Natural killer cell (primary cell): ENCODE measurements at regions of chr17 and their contacts with region 1.

Region 1: GRCh38 chr17:30336369-30337171 is 2.7 kb upstream of the TMIGD1 start:
- DNase-seq: peak; percentile 21 to 85
- ATAC-seq: peak; percentile 51 to 65 (median 62)
- H3K4me3 ChIP-seq: no peak overlapping the region
- H3K4me3 Mint-ChIP-seq: no peak overlapping the region
- H3K27ac ChIP-seq: no peak overlapping the region
- H3K27ac Mint-ChIP-seq: no peak overlapping the region
- H3K4me1 ChIP-seq: peaks cover 12% of the 10 kb centered on the region
- H3K4me1 Mint-ChIP-seq: peaks cover 20 to 30% of the 10 kb centered on the region in 2 donors
- H3K27me3 ChIP-seq: no peaks in the 10 kb centered on the region
- H3K27me3 Mint-ChIP-seq: no peaks in the 10 kb centered on the region
- CTCF ChIP-seq: peak; percentile 85

Region 2: DNA sequence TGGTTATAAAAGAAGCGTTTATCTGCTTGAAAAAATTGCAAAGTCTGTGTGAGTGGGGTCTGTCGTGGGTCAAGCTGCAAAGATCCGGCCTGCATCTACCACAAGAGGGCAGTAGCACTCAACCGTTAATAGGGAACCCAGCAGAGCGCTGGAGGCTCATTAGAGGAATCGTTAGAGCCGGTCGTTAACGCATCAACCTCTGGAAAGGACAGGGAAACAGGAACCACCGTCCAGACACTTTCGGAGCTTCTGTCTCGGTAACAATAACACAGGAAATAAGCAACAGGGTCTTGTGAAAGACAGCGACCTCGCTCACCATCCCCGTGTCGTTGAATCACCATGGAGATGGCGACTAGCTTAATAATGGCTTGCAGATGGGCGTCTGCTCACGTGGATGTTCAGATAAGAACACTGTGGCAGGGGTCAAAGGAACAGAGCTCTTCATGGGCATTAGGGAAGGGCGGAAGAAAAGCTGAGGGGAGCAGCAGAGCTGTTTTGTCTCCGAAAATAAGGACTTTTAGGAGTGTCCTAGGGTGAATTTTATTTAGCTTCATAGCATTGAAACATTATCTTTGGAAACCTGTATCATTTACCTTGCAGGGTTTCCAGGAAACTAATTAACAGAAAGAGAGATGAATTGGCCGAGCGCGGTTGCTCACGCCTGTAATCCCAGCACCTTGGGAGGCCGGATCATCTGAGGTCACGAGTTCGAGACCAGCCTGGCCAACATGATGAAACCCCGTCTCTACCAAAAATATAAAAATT is 231.8 kb before region 1 on chr17:
- intact Hi-C with region 1: loop called (anchors 1 kb)
- DNase-seq: peak; percentile 55 to 87
- ATAC-seq: peak; percentile 93 to 95 (median 94)
- H3K4me3 ChIP-seq: peak overlapping the region; percentile 25
- H3K4me3 Mint-ChIP-seq: peak overlapping the region; percentile 84
- H3K27ac ChIP-seq: no peak overlapping the region
- H3K27ac Mint-ChIP-seq: peak overlapping the region; percentile 4 to 78
- H3K4me1 ChIP-seq: peaks cover 8% of the 10 kb centered on the region
- H3K4me1 Mint-ChIP-seq: peaks cover 6% of the 10 kb centered on the region in 2 donors
- H3K27me3 ChIP-seq: no peaks in the 10 kb centered on the region
- H3K27me3 Mint-ChIP-seq: peaks cover 10 to 27% of the 10 kb centered on the region in 2 donors
- CTCF ChIP-seq: peak; percentile 95

Region 3: GRCh38 chr17:30124273-30124796 is 212.2 kb before region 1 on chr17:
- intact Hi-C with region 1: loop called (anchors 1 kb)
- DNase-seq: no peak
- ATAC-seq: no peak
- H3K4me3 ChIP-seq: no peak overlapping the region
- H3K4me3 Mint-ChIP-seq: no peak overlapping the region
- H3K27ac ChIP-seq: no peak overlapping the region
- H3K27ac Mint-ChIP-seq: no peak overlapping the region
- H3K4me1 ChIP-seq: peaks cover 8% of the 10 kb centered on the region
- H3K4me1 Mint-ChIP-seq: peaks cover 26 to 31% of the 10 kb centered on the region in 2 donors
- H3K27me3 ChIP-seq: no peaks in the 10 kb centered on the region
- H3K27me3 Mint-ChIP-seq: no peaks in the 10 kb centered on the region
- CTCF ChIP-seq: no peak

Region 4: GRCh38 chr17:30291543-30292285 is 44.9 kb before region 1 on chr17 and contains the start of gene BLMH:
- intact Hi-C with region 1: loop called (anchors 5 kb)
- DNase-seq: peak; percentile 79 to 87
- ATAC-seq: peak; percentile 94 to 95 (median 94)
- H3K4me3 ChIP-seq: peak within 1 kb of the TSS; percentile 63
- H3K4me3 Mint-ChIP-seq: peak within 1 kb of the TSS; percentile 85
- H3K27ac ChIP-seq: peak within 1 kb of the TSS; percentile 42
- H3K27ac Mint-ChIP-seq: peak within 1 kb of the TSS in 1 of 2 donors; percentile 41
- H3K4me1 ChIP-seq: peaks cover 9% of the 10 kb centered on the region
- H3K4me1 Mint-ChIP-seq: peaks cover 12 to 13% of the 10 kb centered on the region in 2 donors
- H3K27me3 ChIP-seq: no peaks in the 10 kb centered on the region
- H3K27me3 Mint-ChIP-seq: no peaks in the 10 kb centered on the region
- CTCF ChIP-seq: no peak
- total RNA-seq, gene BLMH: 44.8 to 52.8 (median 46.7) TPM

Region 5: GRCh38 chr17:30352240-30352814 is 15.8 kb after region 1 on chr17:
- intact Hi-C with region 1: no loop called
- DNase-seq: no peak
- ATAC-seq: peak; percentile 68 to 77 (median 75)
- H3K4me3 ChIP-seq: no peak overlapping the region
- H3K4me3 Mint-ChIP-seq: no peak overlapping the region
- H3K27ac ChIP-seq: no peak overlapping the region
- H3K27ac Mint-ChIP-seq: peak overlapping the region; percentile 36 to 52
- H3K4me1 ChIP-seq: peaks cover 12% of the 10 kb centered on the region
- H3K4me1 Mint-ChIP-seq: peaks cover 20 to 26% of the 10 kb centered on the region in 2 donors
- H3K27me3 ChIP-seq: no peaks in the 10 kb centered on the region
- H3K27me3 Mint-ChIP-seq: no peaks in the 10 kb centered on the region
- CTCF ChIP-seq: no peak

Region 6: GRCh38 chr17:30378824-30379302 is 42.3 kb after region 1 on chr17 and contains the start of gene CPD:
- intact Hi-C with region 1: loop called (anchors 5 kb)
- DNase-seq: peak; percentile 98
- ATAC-seq: peak; percentile 90 to 97 (median 92)
- H3K4me3 ChIP-seq: peak within 1 kb of the TSS; percentile 83
- H3K4me3 Mint-ChIP-seq: peak within 1 kb of the TSS; percentile 93
- H3K27ac ChIP-seq: peak within 1 kb of the TSS; percentile 81
- H3K27ac Mint-ChIP-seq: peak within 1 kb of the TSS; percentile 83 to 93
- H3K4me1 ChIP-seq: peaks cover 21% of the 10 kb centered on the region
- H3K4me1 Mint-ChIP-seq: peaks cover 54 to 59% of the 10 kb centered on the region in 2 donors
- H3K27me3 ChIP-seq: no peaks in the 10 kb centered on the region
- H3K27me3 Mint-ChIP-seq: peaks cover 0 to 6% of the 10 kb centered on the region in 2 donors
- CTCF ChIP-seq: no peak
- total RNA-seq, gene CPD: 67.3 to 94.5 (median 85.9) TPM